ENCODE measurements at regions of chr21 and their contacts with region 1.

Region 1: DNA sequence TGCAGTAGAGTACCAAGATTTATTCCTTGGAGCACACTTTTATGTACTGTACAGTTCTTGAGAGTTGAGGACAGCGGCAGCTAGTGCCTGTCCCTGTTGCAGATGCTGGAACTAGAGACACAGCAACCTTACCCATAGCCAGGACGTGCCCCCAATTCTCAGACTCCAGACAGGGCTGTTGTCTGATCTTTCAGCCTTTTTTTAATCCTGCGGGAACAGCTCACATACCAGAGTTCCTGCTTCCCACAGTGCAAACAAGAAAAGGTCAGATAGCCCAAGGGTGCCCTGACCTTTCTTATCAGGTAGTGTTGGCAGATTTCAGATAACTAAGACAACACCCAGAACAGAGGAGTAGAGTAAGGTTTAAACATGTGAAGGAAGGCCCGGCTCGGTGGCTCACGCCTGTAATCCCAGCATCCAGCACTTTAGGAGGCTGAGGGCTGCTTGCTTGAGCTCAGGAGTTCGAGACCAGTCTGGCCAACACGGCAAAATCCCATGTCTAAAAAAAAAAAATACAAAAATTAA is 78.5 kb downstream of the DOP1B start:
- DNase-seq: no peak
- ATAC-seq: no peak
- H3K4me3 ChIP-seq: no peak overlapping the region
- H3K4me3 Mint-ChIP-seq: no peak overlapping the region
- H3K27ac ChIP-seq: no peak overlapping the region
- H3K27ac Mint-ChIP-seq: no peak overlapping the region
- H3K4me1 ChIP-seq: peaks cover 7 to 22% of the 10 kb centered on the region in 2 donors
- H3K4me1 Mint-ChIP-seq: peaks cover 26% of the 10 kb centered on the region
- H3K27me3 ChIP-seq: no peaks in the 10 kb centered on the region
- H3K27me3 Mint-ChIP-seq: no peaks in the 10 kb centered on the region
- CTCF ChIP-seq: no peak

Region 2: DNA sequence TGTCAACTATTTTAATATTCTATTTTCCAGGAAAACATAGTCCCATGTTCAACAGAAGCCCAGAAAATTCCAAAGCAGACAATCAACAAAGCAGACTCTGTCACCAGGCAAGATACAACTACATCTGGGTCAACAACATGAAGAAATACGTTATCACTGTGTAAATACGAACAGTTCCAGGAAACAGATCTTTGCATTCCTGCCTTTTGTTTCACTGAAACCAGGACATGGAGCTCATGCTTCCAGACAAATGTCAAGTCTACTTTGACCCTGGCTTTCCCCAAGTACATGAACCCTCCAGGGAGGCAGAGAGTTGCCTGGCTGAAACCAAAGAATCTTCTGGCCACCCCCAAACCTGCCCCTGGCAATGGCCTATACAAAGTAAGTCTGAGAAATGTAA is 281.5 kb before region 1 on chr21:
- CTCF ChIA-PET with region 1: no interaction called
- POLR2A ChIA-PET with region 1: no interaction called
- intact Hi-C with region 1: no loop called
- DNase-seq: no peak
- ATAC-seq: no peak
- H3K4me3 ChIP-seq: no peak overlapping the region
- H3K4me3 Mint-ChIP-seq: no peak overlapping the region
- H3K27ac ChIP-seq: no peak overlapping the region
- H3K27ac Mint-ChIP-seq: no peak overlapping the region
- H3K4me1 ChIP-seq: no peaks in the 10 kb centered on the region
- H3K4me1 Mint-ChIP-seq: no peaks in the 10 kb centered on the region
- H3K27me3 ChIP-seq: no peaks in the 10 kb centered on the region
- H3K27me3 Mint-ChIP-seq: peaks cover 21% of the 10 kb centered on the region
- CTCF ChIP-seq: no peak

Region 3: GRCh38 chr21:36254106-36254941 is 19.2 kb after region 1 on chr21:
- CTCF ChIA-PET with region 1: interaction called, 4 read pairs
- POLR2A ChIA-PET with region 1: interaction called, 11 read pairs
- intact Hi-C with region 1: no loop called
- DNase-seq: peak; percentile 43
- ATAC-seq: peak; percentile 32
- H3K4me3 ChIP-seq: peak overlapping the region in 4 of 5 experiments; percentile 23 to 58 (median 36)
- H3K4me3 Mint-ChIP-seq: peak overlapping the region; percentile 75
- H3K27ac ChIP-seq: peak overlapping the region; percentile 81 to 84
- H3K27ac Mint-ChIP-seq: peak overlapping the region; percentile 91
- H3K4me1 ChIP-seq: peaks cover 67 to 72% of the 10 kb centered on the region in 2 donors
- H3K4me1 Mint-ChIP-seq: peaks cover 58% of the 10 kb centered on the region
- H3K27me3 ChIP-seq: no peaks in the 10 kb centered on the region
- H3K27me3 Mint-ChIP-seq: no peaks in the 10 kb centered on the region
- CTCF ChIP-seq: no peak

Region 4: GRCh38 chr21:36265431-36265830 is 30.3 kb after region 1 on chr21:
- CTCF ChIA-PET with region 1: interaction called, 5 read pairs
- POLR2A ChIA-PET with region 1: interaction called, 10 read pairs
- intact Hi-C with region 1: no loop called
- DNase-seq: no peak
- ATAC-seq: no peak
- H3K4me3 ChIP-seq: no peak overlapping the region
- H3K4me3 Mint-ChIP-seq: no peak overlapping the region
- H3K27ac ChIP-seq: no peak overlapping the region
- H3K27ac Mint-ChIP-seq: peak overlapping the region; percentile 17
- H3K4me1 ChIP-seq: peaks cover 40 to 53% of the 10 kb centered on the region in 2 donors
- H3K4me1 Mint-ChIP-seq: peaks cover 44% of the 10 kb centered on the region
- H3K27me3 ChIP-seq: no peaks in the 10 kb centered on the region
- H3K27me3 Mint-ChIP-seq: no peaks in the 10 kb centered on the region
- CTCF ChIP-seq: no peak